Adrenal gland (tissue), 19 donors: ENCODE measurements at regions of chr1 and their contacts with region 1.

Region 1: GRCh38 chr1:65687428-65688214 is 105.1 kb upstream of the PDE4B start:
- DNase-seq: peak; percentile 84 to 97 (median 92)
- H3K4me3 ChIP-seq: no peak overlapping the region
- H3K27ac ChIP-seq: peak overlapping the region in 1 of 5 donors; percentile 9
- H3K4me1 ChIP-seq: peaks cover 8 to 23% of the 10 kb centered on the region in 2 donors
- H3K27me3 ChIP-seq: no peaks in the 10 kb centered on the region
- CTCF ChIP-seq: peak; percentile 96 to 99 (median 98)
- POLR2A ChIP-seq: no peak

Region 2: DNA sequence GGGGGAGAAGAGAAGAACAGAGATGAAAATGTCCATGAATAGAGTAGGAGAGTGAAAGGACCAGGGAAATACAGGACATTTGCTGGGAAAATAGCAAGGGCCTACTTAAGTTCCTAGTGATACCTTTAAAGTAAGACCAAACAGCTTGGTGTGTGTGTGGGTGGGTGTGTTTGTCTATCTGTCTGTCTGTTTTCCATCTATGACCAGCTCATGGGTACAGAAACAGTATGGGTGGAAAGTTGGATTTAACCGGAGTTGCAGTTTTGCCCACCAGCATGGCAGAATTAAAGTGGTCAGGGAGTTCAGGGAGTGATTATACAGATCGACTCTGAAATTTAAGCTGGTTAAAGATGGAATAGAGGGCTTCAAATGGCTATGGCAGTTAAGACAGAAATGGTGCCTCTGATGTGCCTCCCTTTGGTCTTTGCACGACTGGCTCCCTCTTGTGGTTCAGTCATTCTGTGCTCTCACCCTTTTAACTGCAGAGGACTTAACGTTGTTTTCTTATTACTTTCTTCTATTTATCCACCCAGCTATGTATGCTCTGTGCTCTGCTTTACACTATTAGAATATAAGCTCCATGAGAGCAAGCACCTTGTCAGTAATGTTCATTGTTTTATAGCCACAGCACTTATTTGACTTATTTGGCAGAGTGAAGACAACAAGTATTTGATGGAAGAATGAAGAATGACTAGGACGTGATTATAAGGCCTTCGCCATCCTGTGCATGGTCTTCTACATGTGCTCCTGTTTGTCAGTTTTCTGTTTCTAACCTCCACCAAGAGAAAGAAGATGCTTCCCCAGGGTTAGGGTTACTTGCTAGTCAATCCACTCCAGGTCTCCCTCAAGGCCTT is 612.3 kb before region 1 on chr1:
- intact Hi-C with region 1: loop called in 1 of 2 experiments (anchors 10 kb)
- DNase-seq: peak; percentile 62 to 81 (median 69)
- H3K4me3 ChIP-seq: no peak overlapping the region
- H3K27ac ChIP-seq: no peak overlapping the region
- H3K4me1 ChIP-seq: no peaks in the 10 kb centered on the region
- H3K27me3 ChIP-seq: no peaks in the 10 kb centered on the region
- CTCF ChIP-seq: peak; percentile 65 to 79 (median 75)
- POLR2A ChIP-seq: no peak

Region 3: GRCh38 chr1:65209005-65209885 is 478.4 kb before region 1 on chr1:
- intact Hi-C with region 1: loop called in 1 of 2 experiments (anchors 10 kb)
- DNase-seq: peak in 5 of 7 donors; percentile 17 to 39 (median 25)
- H3K4me3 ChIP-seq: no peak overlapping the region
- H3K27ac ChIP-seq: no peak overlapping the region
- H3K4me1 ChIP-seq: no peaks in the 10 kb centered on the region
- H3K27me3 ChIP-seq: no peaks in the 10 kb centered on the region
- CTCF ChIP-seq: peak; percentile 37 to 70 (median 58)
- POLR2A ChIP-seq: no peak

Region 4: DNA sequence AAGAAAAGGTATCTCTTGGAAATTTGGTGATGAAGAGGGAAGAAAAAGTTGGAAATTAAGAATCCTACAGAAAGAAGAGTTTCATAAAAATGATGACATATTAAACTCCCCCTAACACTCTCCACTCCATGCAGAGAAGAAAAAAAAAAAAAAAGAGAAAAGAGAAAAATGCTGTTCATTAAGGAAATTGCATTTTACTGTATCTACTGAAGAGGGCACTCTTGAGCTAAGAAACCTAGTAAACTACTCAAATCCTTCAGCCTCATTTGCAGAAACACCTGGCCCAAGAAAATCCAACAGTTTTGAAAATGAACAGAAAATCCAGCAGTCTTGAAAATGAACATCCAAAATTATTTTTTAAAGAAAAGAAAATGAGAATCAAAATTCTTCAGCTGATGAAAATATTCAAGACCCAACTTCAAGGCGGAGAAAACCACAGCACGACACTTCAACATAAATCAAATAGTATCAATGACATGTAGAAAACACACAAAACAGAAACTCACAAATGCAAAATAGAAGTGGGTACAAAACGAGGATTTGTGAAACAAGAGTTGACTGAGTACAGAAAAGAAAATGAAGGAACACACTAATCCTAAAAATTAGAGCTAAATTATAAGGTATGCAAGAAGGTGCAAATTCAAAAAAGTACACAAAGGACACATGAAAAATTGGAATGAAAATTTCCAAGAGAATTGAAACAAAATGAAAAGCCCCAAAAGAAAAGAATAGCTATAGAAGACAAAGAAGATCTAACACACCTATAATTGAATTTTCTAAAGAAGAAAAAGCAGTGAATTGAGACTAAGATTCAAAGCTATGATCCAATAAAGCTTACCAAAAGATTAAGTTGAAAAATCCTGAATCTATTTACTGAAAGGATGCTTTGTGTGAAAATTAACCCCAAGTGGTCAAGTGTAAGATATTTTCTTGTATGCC is 451.5 kb before region 1 on chr1:
- intact Hi-C with region 1: loop called in 1 of 2 experiments (anchors 10 kb)
- DNase-seq: no peak
- H3K4me3 ChIP-seq: no peak overlapping the region
- H3K27ac ChIP-seq: no peak overlapping the region
- H3K4me1 ChIP-seq: no peaks in the 10 kb centered on the region
- H3K27me3 ChIP-seq: no peaks in the 10 kb centered on the region
- CTCF ChIP-seq: peak; percentile 45 to 85 (median 60)
- POLR2A ChIP-seq: no peak

Region 5: GRCh38 chr1:65431111-65431705 is 256.4 kb before region 1 on chr1:
- intact Hi-C with region 1: loop called in 1 of 2 experiments (anchors 10 kb)
- DNase-seq: no peak
- H3K4me3 ChIP-seq: no peak overlapping the region
- H3K27ac ChIP-seq: peak overlapping the region in 1 of 5 donors; percentile 85
- H3K4me1 ChIP-seq: peaks cover 14 to 28% of the 10 kb centered on the region in 2 donors
- H3K27me3 ChIP-seq: no peaks in the 10 kb centered on the region
- CTCF ChIP-seq: peak; percentile 22 to 67 (median 50)
- POLR2A ChIP-seq: no peak